Caco-2 (cell line): ENCODE measurements at regions of chr2 and their contacts with region 1.

Region 1: GRCh38 chr2:179558010-179558934 is 293.6 kb upstream of the SESTD1 start:
- DNase-seq: no peak
- H3K4me3 ChIP-seq: no peak overlapping the region
- H3K4me3 Mint-ChIP-seq: no peak overlapping the region
- H3K27ac Mint-ChIP-seq: no peak overlapping the region
- H3K4me1 ChIP-seq: peaks cover 7% of the 10 kb centered on the region; the same call in 1 of the 2 replicates
- H3K4me1 Mint-ChIP-seq: peaks cover 13% of the 10 kb centered on the region
- H3K27me3 ChIP-seq: no peaks in the 10 kb centered on the region
- H3K27me3 Mint-ChIP-seq: no peaks in the 10 kb centered on the region
- CTCF ChIP-seq: no peak

Region 2: GRCh38 chr2:179521944-179522343 is 36.3 kb before region 1 on chr2:
- CTCF ChIA-PET with region 1: no interaction called
- POLR2A ChIA-PET with region 1: no interaction called
- intact Hi-C with region 1: loop called (anchors 1 kb)
- DNase-seq: no peak
- H3K4me3 ChIP-seq: no peak overlapping the region
- H3K4me3 Mint-ChIP-seq: no peak overlapping the region
- H3K27ac Mint-ChIP-seq: no peak overlapping the region
- H3K4me1 ChIP-seq: peaks cover 6% of the 10 kb centered on the region; the same call in 1 of the 2 replicates
- H3K4me1 Mint-ChIP-seq: peaks cover 6% of the 10 kb centered on the region
- H3K27me3 ChIP-seq: no peaks in the 10 kb centered on the region
- H3K27me3 Mint-ChIP-seq: no peaks in the 10 kb centered on the region
- CTCF ChIP-seq: no peak

Region 3: GRCh38 chr2:179612108-179612507 is 53.8 kb after region 1 on chr2:
- CTCF ChIA-PET with region 1: no interaction called
- POLR2A ChIA-PET with region 1: no interaction called
- intact Hi-C with region 1: no loop called
- DNase-seq: no peak
- H3K4me3 ChIP-seq: no peak overlapping the region
- H3K4me3 Mint-ChIP-seq: no peak overlapping the region
- H3K27ac Mint-ChIP-seq: no peak overlapping the region
- H3K4me1 ChIP-seq: no peaks in the 10 kb centered on the region; the same call in 1 of the 2 replicates
- H3K4me1 Mint-ChIP-seq: no peaks in the 10 kb centered on the region
- H3K27me3 ChIP-seq: no peaks in the 10 kb centered on the region
- H3K27me3 Mint-ChIP-seq: no peaks in the 10 kb centered on the region
- CTCF ChIP-seq: no peak

Region 4: DNA sequence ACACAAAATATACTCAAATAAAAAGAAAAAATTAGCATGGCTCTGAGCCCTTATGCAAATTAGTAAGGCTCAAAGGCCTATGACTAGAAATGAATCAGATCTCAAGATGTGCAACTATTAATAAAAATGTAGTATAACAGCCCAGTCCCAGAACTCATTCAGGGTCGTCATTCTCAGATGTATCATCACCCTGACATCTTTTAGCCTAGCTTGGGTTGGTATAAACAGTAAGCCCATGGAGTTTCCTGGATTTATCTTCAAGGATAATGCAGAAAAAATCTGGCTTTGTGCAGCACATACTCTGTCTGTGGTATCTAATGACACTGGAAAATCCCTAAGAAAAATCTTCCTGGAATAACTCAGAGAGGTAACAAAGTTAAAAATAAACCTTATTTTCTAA is 63.8 kb after region 1 on chr2:
- CTCF ChIA-PET with region 1: no interaction called
- POLR2A ChIA-PET with region 1: no interaction called
- intact Hi-C with region 1: no loop called
- DNase-seq: no peak
- H3K4me3 ChIP-seq: no peak overlapping the region
- H3K4me3 Mint-ChIP-seq: no peak overlapping the region
- H3K27ac Mint-ChIP-seq: no peak overlapping the region
- H3K4me1 ChIP-seq: no peaks in the 10 kb centered on the region
- H3K4me1 Mint-ChIP-seq: no peaks in the 10 kb centered on the region
- H3K27me3 ChIP-seq: no peaks in the 10 kb centered on the region
- H3K27me3 Mint-ChIP-seq: no peaks in the 10 kb centered on the region
- CTCF ChIP-seq: no peak

Region 5: GRCh38 chr2:179745635-179746256 is 187.5 kb after region 1 on chr2:
- CTCF ChIA-PET with region 1: no interaction called
- POLR2A ChIA-PET with region 1: no interaction called
- intact Hi-C with region 1: no loop called
- DNase-seq: no peak
- H3K4me3 ChIP-seq: no peak overlapping the region
- H3K4me3 Mint-ChIP-seq: no peak overlapping the region
- H3K27ac Mint-ChIP-seq: no peak overlapping the region
- H3K4me1 ChIP-seq: no peaks in the 10 kb centered on the region
- H3K4me1 Mint-ChIP-seq: peaks cover 4% of the 10 kb centered on the region
- H3K27me3 ChIP-seq: no peaks in the 10 kb centered on the region
- H3K27me3 Mint-ChIP-seq: peaks cover under 1% of the 10 kb centered on the region
- CTCF ChIP-seq: no peak